ENCODE measurements at regions of chr15 and their contacts with region 1.

Region 1: GRCh38 chr15:71743861-71744382 is 66.4 kb upstream of the NR2E3 start:
- DNase-seq: peak; percentile 55 to 68
- H3K4me3 ChIP-seq: no peak overlapping the region
- H3K4me3 Mint-ChIP-seq: no peak overlapping the region
- H3K27ac Mint-ChIP-seq: no peak overlapping the region
- H3K4me1 ChIP-seq: peaks cover 47% of the 10 kb centered on the region
- H3K4me1 Mint-ChIP-seq: peaks cover 44% of the 10 kb centered on the region
- H3K27me3 ChIP-seq: no peaks in the 10 kb centered on the region
- H3K27me3 Mint-ChIP-seq: no peaks in the 10 kb centered on the region
- CTCF ChIP-seq: peak; percentile 59 to 63

Region 2: DNA sequence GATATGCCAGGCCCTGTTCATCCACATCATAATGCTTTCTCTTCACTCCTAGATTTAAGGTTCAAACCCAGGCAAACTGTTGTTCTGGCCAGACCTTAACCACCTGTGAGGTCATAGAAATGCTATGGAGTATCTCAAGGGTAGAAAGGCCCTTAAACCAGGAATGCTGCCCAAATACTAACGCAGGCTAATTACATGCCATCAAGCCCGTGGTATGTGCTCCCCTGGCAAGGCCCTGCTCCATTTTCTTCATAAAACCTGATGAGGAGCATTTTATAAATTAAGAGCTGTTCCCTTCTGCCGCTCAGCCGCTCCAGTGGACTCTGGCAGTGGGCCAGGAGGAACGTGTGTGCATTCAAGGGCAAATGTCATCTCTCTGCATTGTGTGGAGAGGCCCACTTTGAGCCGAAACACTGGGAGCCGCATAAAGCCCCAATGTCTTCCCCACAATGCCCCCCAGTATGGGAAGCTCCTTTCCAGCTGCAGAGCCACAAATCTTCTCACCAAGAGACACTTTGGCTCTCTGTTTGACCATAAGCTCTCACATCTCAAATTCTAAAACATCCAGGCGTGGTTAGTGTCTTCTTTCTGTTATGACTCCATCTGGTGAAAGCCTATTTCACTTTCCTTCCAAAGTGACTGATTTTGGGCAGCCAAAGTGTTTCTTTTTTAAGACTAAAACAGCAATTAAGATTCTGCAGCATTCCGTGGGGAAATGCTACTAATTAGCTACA is 144.3 kb before region 1 on chr15:
- CTCF ChIA-PET with region 1: interaction called, 13 read pairs
- POLR2A ChIA-PET with region 1: no interaction called
- intact Hi-C with region 1: no loop called
- DNase-seq: no peak
- H3K4me3 ChIP-seq: no peak overlapping the region
- H3K4me3 Mint-ChIP-seq: peak overlapping the region; percentile 2
- H3K27ac Mint-ChIP-seq: peak overlapping the region; percentile 11
- H3K4me1 ChIP-seq: peaks cover 35% of the 10 kb centered on the region
- H3K4me1 Mint-ChIP-seq: peaks cover 23% of the 10 kb centered on the region
- H3K27me3 ChIP-seq: no peaks in the 10 kb centered on the region
- H3K27me3 Mint-ChIP-seq: no peaks in the 10 kb centered on the region
- CTCF ChIP-seq: no peak

Region 3: DNA sequence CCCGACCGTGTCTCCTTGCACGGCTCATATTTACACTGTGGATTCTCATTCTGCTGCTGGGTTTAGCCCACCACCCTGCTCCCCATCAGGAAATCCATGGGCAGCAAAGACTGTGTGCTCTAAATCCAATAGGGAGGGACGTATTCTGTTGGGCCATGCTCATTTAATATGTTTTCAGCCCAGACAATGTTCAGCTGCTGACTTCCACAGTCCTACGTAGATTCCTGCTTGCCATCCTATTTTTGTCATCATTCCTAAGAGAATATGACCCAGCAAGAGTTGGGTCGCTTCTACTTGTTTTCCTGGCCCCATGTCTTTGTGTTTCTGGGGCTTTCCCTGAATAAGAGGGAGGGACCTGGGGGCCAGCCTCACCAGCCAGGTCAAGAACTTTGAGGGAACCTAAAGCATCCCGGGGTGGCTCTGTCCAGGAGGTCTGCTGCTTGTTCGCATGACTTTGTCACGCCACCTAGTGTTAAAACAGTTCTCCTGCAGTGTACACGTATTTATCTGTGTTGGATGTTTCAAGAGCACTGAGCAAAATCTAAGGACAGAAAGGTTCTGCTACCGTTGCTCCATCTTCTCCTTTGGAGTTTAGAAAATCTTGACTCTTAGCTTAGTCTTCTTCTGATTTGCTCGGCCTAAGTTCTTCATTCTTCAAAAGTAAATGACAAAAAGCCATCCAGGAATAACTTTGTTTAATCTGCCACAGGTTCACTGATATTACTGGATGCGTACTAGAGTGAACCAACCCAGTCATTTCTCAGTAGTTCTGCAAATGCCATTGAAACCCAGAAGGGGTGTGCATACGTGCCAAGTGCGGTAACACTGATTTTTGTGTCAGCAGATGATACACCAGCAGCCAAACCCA is 13.4 kb before region 1 on chr15:
- CTCF ChIA-PET with region 1: interaction called, 10 read pairs
- POLR2A ChIA-PET with region 1: no interaction called
- intact Hi-C with region 1: no loop called
- DNase-seq: peak; percentile 62 to 63
- H3K4me3 ChIP-seq: no peak overlapping the region
- H3K4me3 Mint-ChIP-seq: no peak overlapping the region
- H3K27ac Mint-ChIP-seq: no peak overlapping the region
- H3K4me1 ChIP-seq: peaks cover 16% of the 10 kb centered on the region
- H3K4me1 Mint-ChIP-seq: no peaks in the 10 kb centered on the region
- H3K27me3 ChIP-seq: no peaks in the 10 kb centered on the region
- H3K27me3 Mint-ChIP-seq: no peaks in the 10 kb centered on the region
- CTCF ChIP-seq: peak in 1 of 2 experiments; percentile 67

Region 4: DNA sequence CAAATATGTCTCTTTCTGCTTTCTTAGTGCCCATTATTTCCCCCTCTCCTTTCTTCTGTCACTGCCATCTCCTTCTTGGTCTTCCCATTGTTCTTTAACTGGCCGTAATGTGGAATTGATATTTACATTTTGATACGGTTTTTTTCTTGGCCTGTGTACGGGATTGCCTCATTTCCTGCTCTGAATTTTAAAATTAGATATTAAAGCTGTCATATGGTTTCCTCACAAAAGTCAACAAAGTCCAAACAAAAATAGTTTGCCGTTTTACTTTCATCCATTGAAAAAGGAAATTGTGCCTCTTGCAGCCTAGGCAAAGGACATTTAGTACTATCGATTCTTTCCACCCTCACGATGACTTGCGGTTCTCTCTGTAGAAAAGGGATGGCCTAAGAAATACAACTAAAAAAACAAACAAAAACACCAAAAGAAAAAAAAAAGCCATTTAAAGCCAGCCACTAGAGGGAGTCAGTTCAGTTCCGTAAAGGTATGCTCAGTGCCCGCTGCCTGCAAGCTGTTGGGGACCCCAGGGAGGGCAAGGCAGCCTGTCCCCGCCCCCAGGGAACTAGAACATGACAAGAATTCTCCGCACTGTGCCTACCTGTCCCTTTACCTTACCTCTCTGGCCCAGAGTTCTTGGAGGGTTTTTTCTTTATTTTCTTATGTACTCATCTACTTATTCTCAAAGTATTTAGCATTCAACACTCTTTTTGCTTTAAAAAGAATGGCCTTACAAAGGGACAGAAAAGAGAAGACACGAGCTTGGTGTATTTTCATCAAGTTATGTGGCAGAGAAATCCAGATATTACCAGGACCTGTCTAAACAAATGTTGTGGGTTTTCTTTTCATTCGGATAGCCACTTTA is 36.4 kb after region 1 on chr15:
- CTCF ChIA-PET with region 1: interaction called, 11 read pairs
- POLR2A ChIA-PET with region 1: no interaction called
- intact Hi-C with region 1: loop called (anchors 5 kb)
- DNase-seq: peak; percentile 55 to 69
- H3K4me3 ChIP-seq: no peak overlapping the region
- H3K4me3 Mint-ChIP-seq: no peak overlapping the region
- H3K27ac Mint-ChIP-seq: no peak overlapping the region
- H3K4me1 ChIP-seq: no peaks in the 10 kb centered on the region
- H3K4me1 Mint-ChIP-seq: peaks cover 7% of the 10 kb centered on the region
- H3K27me3 ChIP-seq: no peaks in the 10 kb centered on the region
- H3K27me3 Mint-ChIP-seq: no peaks in the 10 kb centered on the region
- CTCF ChIP-seq: peak; percentile 73 to 75

Region 5: DNA sequence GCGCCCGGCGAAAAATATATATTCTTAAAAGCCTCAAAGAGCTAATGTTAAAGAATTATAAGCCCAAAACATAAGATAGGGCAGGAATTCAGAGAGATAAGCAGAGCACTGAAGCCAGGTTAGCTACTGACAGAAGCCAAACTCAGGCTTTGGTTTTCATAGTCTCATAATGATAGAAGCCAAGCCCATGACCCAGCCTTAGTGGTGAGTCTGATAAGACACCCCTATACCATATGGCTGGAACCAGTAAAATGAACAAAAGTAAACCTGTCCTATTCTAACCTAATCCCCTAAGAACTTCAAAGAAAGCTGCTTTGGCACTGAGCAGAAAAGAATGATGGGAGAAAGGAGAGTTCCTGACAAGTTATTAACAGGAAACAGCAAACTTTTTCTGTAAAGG is 348.1 kb after region 1 on chr15:
- CTCF ChIA-PET with region 1: interaction called, 11 read pairs
- POLR2A ChIA-PET with region 1: no interaction called
- intact Hi-C with region 1: no loop called
- DNase-seq: peak; percentile 65 to 67
- H3K4me3 ChIP-seq: no peak overlapping the region
- H3K4me3 Mint-ChIP-seq: peak overlapping the region; percentile 58
- H3K27ac Mint-ChIP-seq: peak overlapping the region; percentile 49
- H3K4me1 ChIP-seq: peaks cover 15% of the 10 kb centered on the region
- H3K4me1 Mint-ChIP-seq: peaks cover 39% of the 10 kb centered on the region
- H3K27me3 ChIP-seq: no peaks in the 10 kb centered on the region
- H3K27me3 Mint-ChIP-seq: no peaks in the 10 kb centered on the region
- CTCF ChIP-seq: no peak